Naive thymus-derived CD4-positive, alpha-beta T cell (primary cell): ENCODE measurements at regions of chr9 and their contacts with region 1.

Region 1: DNA sequence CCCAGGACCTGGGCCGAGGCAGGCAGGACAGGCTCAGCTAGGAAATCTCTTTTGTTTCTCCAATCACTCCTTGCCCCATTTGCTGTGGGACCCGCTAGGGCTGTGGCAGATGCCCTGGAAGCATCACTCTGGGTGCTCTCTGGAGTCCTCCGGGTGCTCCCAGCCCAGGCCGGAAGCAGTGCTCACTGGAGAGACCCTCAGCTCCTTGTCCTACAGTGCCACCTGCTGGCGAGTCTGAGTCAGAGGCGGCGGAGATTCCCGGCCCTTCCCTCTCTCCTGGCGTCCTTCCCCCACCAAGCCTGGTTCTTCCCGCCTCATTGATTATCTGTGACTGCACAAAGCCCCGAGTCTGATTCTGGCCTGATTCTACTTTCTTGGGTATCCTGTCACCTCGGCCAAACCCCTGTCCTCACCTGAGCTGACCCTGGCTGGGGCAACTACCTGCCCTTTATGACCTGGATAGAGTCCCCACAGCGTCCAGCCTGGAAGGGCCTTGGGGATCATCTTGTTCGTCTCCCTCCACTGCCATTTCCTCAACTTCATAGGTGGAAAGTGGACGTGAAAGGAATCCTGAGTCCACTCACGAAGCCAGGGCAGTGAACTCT is 7.3 kb upstream of the BARHL1 start:
- DNase-seq: peak in 2 of 9 donors; percentile 20 to 53
- ATAC-seq: peak; percentile 48
- H3K4me3 ChIP-seq: no peak overlapping the region
- H3K4me3 Mint-ChIP-seq: no peak overlapping the region
- H3K27ac ChIP-seq: no peak overlapping the region
- H3K27ac Mint-ChIP-seq: no peak overlapping the region
- H3K4me1 ChIP-seq: no peaks in the 10 kb centered on the region
- H3K4me1 Mint-ChIP-seq: peaks cover 0 to 2% (median 0%) of the 10 kb centered on the region in 7 donors
- H3K27me3 ChIP-seq: peaks cover 0 to 33% of the 10 kb centered on the region in 2 donors
- H3K27me3 Mint-ChIP-seq: peaks cover 52 to 69% (median 58%) of the 10 kb centered on the region in 5 donors

Region 2: GRCh38 chr9:131872006-131872405 is 703.1 kb before region 1 on chr9:
- CTCF ChIA-PET with region 1: no interaction called
- POLR2A ChIA-PET with region 1: no interaction called
- intact Hi-C with region 1: no loop called
- DNase-seq: no peak
- ATAC-seq: no peak
- H3K4me3 ChIP-seq: no peak overlapping the region
- H3K4me3 Mint-ChIP-seq: no peak overlapping the region
- H3K27ac ChIP-seq: no peak overlapping the region
- H3K27ac Mint-ChIP-seq: peak overlapping the region in 1 of 9 donors; percentile 87
- H3K4me1 ChIP-seq: no peaks in the 10 kb centered on the region
- H3K4me1 Mint-ChIP-seq: peaks cover 0 to 20% (median 0%) of the 10 kb centered on the region in 7 donors
- H3K27me3 ChIP-seq: no peaks in the 10 kb centered on the region
- H3K27me3 Mint-ChIP-seq: no peaks in the 10 kb centered on the region

Region 3: GRCh38 chr9:132507746-132508469 is 67.2 kb before region 1 on chr9:
- CTCF ChIA-PET with region 1: no interaction called
- POLR2A ChIA-PET with region 1: no interaction called
- intact Hi-C with region 1: loop called in 1 of 2 experiments (anchors 5 kb)
- DNase-seq: peak; percentile 21 to 62 (median 52)
- ATAC-seq: peak; percentile 74
- H3K4me3 ChIP-seq: no peak overlapping the region
- H3K4me3 Mint-ChIP-seq: no peak overlapping the region
- H3K27ac ChIP-seq: no peak overlapping the region
- H3K27ac Mint-ChIP-seq: no peak overlapping the region
- H3K4me1 ChIP-seq: peaks cover 0 to 7% of the 10 kb centered on the region in 2 donors
- H3K4me1 Mint-ChIP-seq: peaks cover 0 to 14% (median 12%) of the 10 kb centered on the region in 7 donors
- H3K27me3 ChIP-seq: no peaks in the 10 kb centered on the region
- H3K27me3 Mint-ChIP-seq: peaks cover 3 to 24% (median 15%) of the 10 kb centered on the region in 5 donors

Region 4: GRCh38 chr9:132631303-132632084 is 56.4 kb after region 1 on chr9:
- CTCF ChIA-PET with region 1: no interaction called
- POLR2A ChIA-PET with region 1: no interaction called
- intact Hi-C with region 1: no loop called
- DNase-seq: no peak
- ATAC-seq: no peak
- H3K4me3 ChIP-seq: no peak overlapping the region
- H3K4me3 Mint-ChIP-seq: no peak overlapping the region
- H3K27ac ChIP-seq: no peak overlapping the region
- H3K27ac Mint-ChIP-seq: peak overlapping the region in 1 of 9 donors; percentile 69
- H3K4me1 ChIP-seq: no peaks in the 10 kb centered on the region
- H3K4me1 Mint-ChIP-seq: peaks cover 0 to 3% (median 0%) of the 10 kb centered on the region in 7 donors
- H3K27me3 ChIP-seq: no peaks in the 10 kb centered on the region
- H3K27me3 Mint-ChIP-seq: no peaks in the 10 kb centered on the region